CD4-positive, alpha-beta T cell (primary cell): ENCODE measurements at regions of chr2 and their contacts with region 1.

Region 1: GRCh38 chr2:9003616-9004337 is at the start of gene MBOAT2:
- DNase-seq: peak; percentile 56 to 91 (median 72)
- ATAC-seq: peak; percentile 85
- H3K4me3 ChIP-seq: peak within 1 kb of the TSS; percentile 74
- H3K4me3 Mint-ChIP-seq: peak within 1 kb of the TSS; percentile 91
- H3K27ac ChIP-seq: peak within 1 kb of the TSS in 1 of 2 donors; percentile 35
- H3K27ac Mint-ChIP-seq: peak within 1 kb of the TSS; percentile 82
- H3K4me1 ChIP-seq: peaks cover 15% of the 10 kb centered on the region
- H3K4me1 Mint-ChIP-seq: peaks cover 26% of the 10 kb centered on the region
- H3K27me3 ChIP-seq: no peaks in the 10 kb centered on the region
- H3K27me3 Mint-ChIP-seq: no peaks in the 10 kb centered on the region
- CTCF ChIP-seq: no peak
- total RNA-seq, gene MBOAT2: 1.9 to 2.0 TPM

Region 2: DNA sequence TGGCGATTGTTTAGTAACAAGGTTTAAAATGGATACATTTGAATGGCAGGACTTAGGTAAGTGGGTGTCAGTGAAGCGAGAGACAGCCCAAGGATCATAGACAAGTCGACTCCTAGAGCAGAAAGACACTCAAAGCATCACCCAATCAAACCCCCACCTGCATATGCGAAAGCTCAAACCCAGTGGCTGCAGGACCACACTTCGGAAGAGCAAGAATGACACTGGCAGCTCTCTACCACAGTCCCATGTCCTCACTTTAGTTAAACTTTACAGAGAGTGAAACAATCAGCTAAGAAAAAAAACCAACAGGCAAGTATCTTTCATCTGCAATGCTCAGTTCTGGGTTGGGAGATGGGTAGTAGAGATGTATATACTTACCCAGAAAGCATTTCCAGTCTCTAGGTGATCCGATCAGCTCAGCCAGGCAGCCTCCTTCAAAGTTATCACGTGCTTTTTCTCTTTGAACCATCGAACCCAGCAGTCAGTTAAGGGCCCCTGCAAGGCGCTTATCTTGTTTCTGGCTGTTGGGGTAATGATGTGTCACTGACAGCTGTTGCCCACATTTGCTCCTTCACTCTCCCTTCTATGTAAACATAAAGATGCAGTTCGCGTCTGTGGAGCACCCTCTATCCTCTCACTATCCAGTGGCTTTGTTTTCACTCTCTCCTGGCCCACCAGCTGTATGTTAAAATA is 679.5 kb before region 1 on chr2:
- CTCF ChIA-PET with region 1: no interaction called
- POLR2A ChIA-PET with region 1: no interaction called
- intact Hi-C with region 1: no loop called
- DNase-seq: no peak
- ATAC-seq: no peak
- H3K4me3 ChIP-seq: no peak overlapping the region
- H3K4me3 Mint-ChIP-seq: no peak overlapping the region
- H3K27ac ChIP-seq: no peak overlapping the region
- H3K27ac Mint-ChIP-seq: no peak overlapping the region
- H3K4me1 ChIP-seq: peaks cover 29% of the 10 kb centered on the region
- H3K4me1 Mint-ChIP-seq: peaks cover 21% of the 10 kb centered on the region
- H3K27me3 ChIP-seq: no peaks in the 10 kb centered on the region
- H3K27me3 Mint-ChIP-seq: no peaks in the 10 kb centered on the region
- CTCF ChIP-seq: no peak

Region 3: DNA sequence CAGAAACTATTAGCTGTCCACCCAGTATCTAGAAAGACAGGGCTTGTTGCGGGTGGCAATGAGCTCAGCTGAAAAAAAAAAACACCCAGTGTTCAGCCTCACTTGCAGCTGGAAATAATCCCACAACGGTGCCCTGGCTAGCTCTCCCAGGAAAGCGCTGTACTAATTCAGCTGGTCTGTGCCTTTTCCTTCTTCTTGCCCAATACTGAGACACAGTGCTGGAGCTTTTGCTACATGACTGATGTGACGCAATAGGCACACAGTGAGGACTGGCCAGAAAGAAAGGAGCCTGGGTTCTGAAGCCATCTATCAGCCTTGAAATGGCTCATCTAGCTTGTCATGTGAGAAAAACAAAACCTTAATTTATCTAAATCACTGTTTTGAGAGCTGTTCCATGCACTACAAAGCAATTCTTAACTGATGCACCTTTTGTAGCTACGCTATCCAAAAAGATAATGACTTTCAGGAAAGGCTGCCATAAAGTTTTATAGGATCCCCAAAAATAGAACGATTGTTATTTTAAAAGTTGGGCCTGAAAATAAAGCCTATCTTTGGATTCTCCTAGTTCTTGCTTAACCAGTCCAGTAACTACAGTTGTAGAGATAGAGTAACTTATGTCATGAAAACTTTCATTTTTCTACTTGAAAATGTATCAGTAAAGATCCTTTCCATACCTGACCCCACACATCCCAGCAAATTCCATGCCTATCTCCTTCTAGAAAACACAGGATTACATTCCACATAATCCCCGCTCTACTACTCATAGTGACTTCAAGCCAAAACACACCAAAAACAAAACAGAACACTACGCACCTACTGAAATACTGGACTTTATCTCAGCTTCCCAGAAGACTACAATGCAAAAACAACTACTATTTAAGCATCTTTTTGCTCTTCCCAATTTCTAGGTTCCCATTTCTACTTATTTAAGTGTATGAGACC is 182.2 kb before region 1 on chr2:
- CTCF ChIA-PET with region 1: no interaction called
- POLR2A ChIA-PET with region 1: no interaction called
- intact Hi-C with region 1: no loop called
- DNase-seq: no peak
- ATAC-seq: no peak
- H3K4me3 ChIP-seq: no peak overlapping the region
- H3K4me3 Mint-ChIP-seq: no peak overlapping the region
- H3K27ac ChIP-seq: no peak overlapping the region
- H3K27ac Mint-ChIP-seq: no peak overlapping the region
- H3K4me1 ChIP-seq: no peaks in the 10 kb centered on the region
- H3K4me1 Mint-ChIP-seq: no peaks in the 10 kb centered on the region
- H3K27me3 ChIP-seq: no peaks in the 10 kb centered on the region
- H3K27me3 Mint-ChIP-seq: no peaks in the 10 kb centered on the region
- CTCF ChIP-seq: no peak

Region 4: GRCh38 chr2:8836971-8837794 is 166.6 kb before region 1 on chr2 and contains the start of gene KIDINS220:
- CTCF ChIA-PET with region 1: no interaction called
- POLR2A ChIA-PET with region 1: no interaction called
- intact Hi-C with region 1: loop called in 1 of 2 experiments (anchors 2 kb)
- DNase-seq: peak; percentile 79 to 93 (median 84)
- ATAC-seq: peak; percentile 96
- H3K4me3 ChIP-seq: peak within 1 kb of the TSS; percentile 89
- H3K4me3 Mint-ChIP-seq: peak within 1 kb of the TSS; percentile 100
- H3K27ac ChIP-seq: peak within 1 kb of the TSS in 1 of 2 donors; percentile 48
- H3K27ac Mint-ChIP-seq: peak within 1 kb of the TSS; percentile 84
- H3K4me1 ChIP-seq: peaks cover 40% of the 10 kb centered on the region
- H3K4me1 Mint-ChIP-seq: peaks cover 49% of the 10 kb centered on the region
- H3K27me3 ChIP-seq: no peaks in the 10 kb centered on the region
- H3K27me3 Mint-ChIP-seq: no peaks in the 10 kb centered on the region
- CTCF ChIP-seq: no peak
- total RNA-seq, gene KIDINS220: 29.3 to 31.4 TPM

Region 5: GRCh38 chr2:9030841-9031240 is 27.1 kb after region 1 on chr2:
- CTCF ChIA-PET with region 1: no interaction called
- POLR2A ChIA-PET with region 1: no interaction called
- intact Hi-C with region 1: no loop called
- DNase-seq: no peak
- ATAC-seq: no peak
- H3K4me3 ChIP-seq: no peak overlapping the region
- H3K4me3 Mint-ChIP-seq: no peak overlapping the region
- H3K27ac ChIP-seq: no peak overlapping the region
- H3K27ac Mint-ChIP-seq: no peak overlapping the region
- H3K4me1 ChIP-seq: no peaks in the 10 kb centered on the region
- H3K4me1 Mint-ChIP-seq: peaks cover 4% of the 10 kb centered on the region
- H3K27me3 ChIP-seq: peaks cover 2 to 5% of the 10 kb centered on the region in 2 experiments
- H3K27me3 Mint-ChIP-seq: peaks cover 64% of the 10 kb centered on the region
- CTCF ChIP-seq: no peak

Region 6: DNA sequence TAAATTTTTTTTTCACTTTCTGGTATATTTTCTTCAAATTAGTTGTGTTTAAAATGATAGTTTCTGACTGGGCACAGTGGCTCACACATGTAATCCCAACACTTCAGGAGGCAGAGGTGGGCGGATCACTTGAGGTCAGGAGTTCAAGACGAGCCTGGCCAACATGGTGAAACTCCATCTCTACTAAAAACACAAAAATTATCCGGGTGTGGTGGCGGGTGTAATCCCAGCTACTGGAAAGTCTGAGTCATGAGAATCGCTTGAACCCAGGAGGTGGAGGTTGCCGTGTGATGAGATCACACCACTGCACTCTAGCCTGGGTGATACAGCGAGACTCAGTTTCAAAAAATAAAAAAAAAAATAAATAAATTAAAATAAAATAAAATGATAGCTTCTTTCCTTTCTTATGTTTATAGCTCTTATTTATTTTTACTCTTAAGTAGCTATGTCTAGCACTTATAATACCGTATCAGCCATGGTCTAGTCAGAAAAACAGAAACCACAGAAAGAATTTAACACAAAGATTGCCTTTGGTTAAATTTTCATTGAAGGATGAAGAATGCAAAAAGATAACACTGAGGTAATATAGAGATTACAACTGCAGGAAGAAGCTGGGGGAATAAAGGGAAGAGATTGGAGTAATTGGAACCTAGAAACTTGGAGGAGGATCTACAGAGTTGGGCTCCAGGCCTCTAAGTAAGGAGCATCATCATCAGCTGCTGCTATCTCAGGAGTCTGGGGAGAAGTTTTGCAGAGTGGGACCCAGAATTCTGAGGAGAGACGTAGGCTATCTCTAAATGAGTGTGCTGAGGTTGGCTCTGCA is 54.4 kb after region 1 on chr2:
- CTCF ChIA-PET with region 1: no interaction called
- POLR2A ChIA-PET with region 1: no interaction called
- intact Hi-C with region 1: no loop called
- DNase-seq: no peak
- ATAC-seq: no peak
- H3K4me3 ChIP-seq: no peak overlapping the region
- H3K4me3 Mint-ChIP-seq: no peak overlapping the region
- H3K27ac ChIP-seq: no peak overlapping the region
- H3K27ac Mint-ChIP-seq: no peak overlapping the region
- H3K4me1 ChIP-seq: no peaks in the 10 kb centered on the region
- H3K4me1 Mint-ChIP-seq: peaks cover 9% of the 10 kb centered on the region
- H3K27me3 ChIP-seq: peaks cover 0 to 2% of the 10 kb centered on the region in 2 experiments
- H3K27me3 Mint-ChIP-seq: peaks cover under 1% of the 10 kb centered on the region
- CTCF ChIP-seq: no peak

Region 7: DNA sequence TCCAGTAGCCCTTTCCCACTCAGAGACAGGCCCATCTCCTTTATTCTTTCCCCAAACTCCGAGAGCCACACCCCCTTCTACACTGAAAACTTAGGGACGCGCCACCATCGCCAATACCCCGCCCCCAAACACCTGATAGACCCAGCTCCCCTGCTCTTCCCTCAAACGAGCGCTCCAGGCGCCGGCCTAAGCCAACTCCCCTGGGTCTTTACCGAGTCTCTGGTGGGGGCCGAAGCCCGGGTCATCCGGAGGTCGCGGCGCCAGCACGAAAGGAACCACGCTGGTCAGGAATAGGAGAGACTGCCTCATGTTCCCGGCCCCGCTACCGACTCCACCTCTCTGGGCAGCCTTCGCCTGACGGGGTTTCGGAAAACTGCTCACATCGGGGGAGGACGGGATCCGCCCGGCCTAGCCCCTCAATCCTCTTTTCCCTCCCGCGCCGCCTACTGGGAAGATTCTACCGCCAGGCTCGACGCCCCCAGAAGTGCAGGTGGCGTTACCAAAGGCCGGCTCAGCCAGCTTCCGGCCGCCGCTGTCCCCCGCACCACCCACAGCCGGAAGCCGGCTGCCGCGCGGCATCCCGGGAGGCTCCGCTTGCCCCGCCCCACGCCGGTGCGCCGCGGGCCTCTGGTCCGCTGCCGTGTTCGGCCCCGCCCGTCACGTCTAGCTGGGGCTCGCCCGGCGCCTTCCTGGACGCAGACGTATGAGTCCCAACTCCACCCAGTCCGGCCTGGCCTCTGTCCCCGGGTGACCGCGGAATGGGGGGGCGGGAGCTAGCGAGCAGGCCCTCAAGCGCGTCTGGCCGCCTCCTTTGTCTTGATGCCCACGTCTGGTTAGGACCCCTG is 551.7 kb after region 1 on chr2 and contains the start of gene ADAM17:
- CTCF ChIA-PET with region 1: no interaction called
- POLR2A ChIA-PET with region 1: no interaction called
- intact Hi-C with region 1: loop called in 1 of 2 experiments (anchors 10 kb)
- DNase-seq: peak; percentile 60 to 93 (median 80)
- ATAC-seq: peak; percentile 86
- H3K4me3 ChIP-seq: peak within 1 kb of the TSS; percentile 95
- H3K4me3 Mint-ChIP-seq: peak within 1 kb of the TSS; percentile 95
- H3K27ac ChIP-seq: peak within 1 kb of the TSS; percentile 93 to 97
- H3K27ac Mint-ChIP-seq: peak within 1 kb of the TSS; percentile 86
- H3K4me1 ChIP-seq: peaks cover 29% of the 10 kb centered on the region
- H3K4me1 Mint-ChIP-seq: peaks cover 58% of the 10 kb centered on the region
- H3K27me3 ChIP-seq: no peaks in the 10 kb centered on the region
- H3K27me3 Mint-ChIP-seq: no peaks in the 10 kb centered on the region
- CTCF ChIP-seq: peak; percentile 15
- total RNA-seq, gene ADAM17: 21.4 to 21.6 TPM

Region 8: GRCh38 chr2:9951272-9951972 is 947.6 kb after region 1 on chr2 and contains the start of gene GRHL1:
- CTCF ChIA-PET with region 1: no interaction called
- POLR2A ChIA-PET with region 1: no interaction called
- intact Hi-C with region 1: loop called in 1 of 2 experiments (anchors 10 kb)
- DNase-seq: peak; percentile 78 to 98 (median 88)
- ATAC-seq: peak; percentile 95
- H3K4me3 ChIP-seq: peak within 1 kb of the TSS; percentile 52
- H3K4me3 Mint-ChIP-seq: peak within 1 kb of the TSS; percentile 94
- H3K27ac ChIP-seq: no peak within 1 kb of the TSS
- H3K27ac Mint-ChIP-seq: peak within 1 kb of the TSS; percentile 39
- H3K4me1 ChIP-seq: peaks cover 10% of the 10 kb centered on the region
- H3K4me1 Mint-ChIP-seq: peaks cover 4% of the 10 kb centered on the region
- H3K27me3 ChIP-seq: peaks cover 11 to 21% of the 10 kb centered on the region in 2 experiments
- H3K27me3 Mint-ChIP-seq: peaks cover 56% of the 10 kb centered on the region
- CTCF ChIP-seq: no peak
- total RNA-seq, gene GRHL1: 0.28 to 0.38 TPM